Activated naive CD4-positive, alpha-beta T cell treated with anti-CD3 and anti-CD28 coated beads for 36 hours (primary cell): ENCODE measurements at regions of chr7 and their contacts with region 1.

Region 1: DNA sequence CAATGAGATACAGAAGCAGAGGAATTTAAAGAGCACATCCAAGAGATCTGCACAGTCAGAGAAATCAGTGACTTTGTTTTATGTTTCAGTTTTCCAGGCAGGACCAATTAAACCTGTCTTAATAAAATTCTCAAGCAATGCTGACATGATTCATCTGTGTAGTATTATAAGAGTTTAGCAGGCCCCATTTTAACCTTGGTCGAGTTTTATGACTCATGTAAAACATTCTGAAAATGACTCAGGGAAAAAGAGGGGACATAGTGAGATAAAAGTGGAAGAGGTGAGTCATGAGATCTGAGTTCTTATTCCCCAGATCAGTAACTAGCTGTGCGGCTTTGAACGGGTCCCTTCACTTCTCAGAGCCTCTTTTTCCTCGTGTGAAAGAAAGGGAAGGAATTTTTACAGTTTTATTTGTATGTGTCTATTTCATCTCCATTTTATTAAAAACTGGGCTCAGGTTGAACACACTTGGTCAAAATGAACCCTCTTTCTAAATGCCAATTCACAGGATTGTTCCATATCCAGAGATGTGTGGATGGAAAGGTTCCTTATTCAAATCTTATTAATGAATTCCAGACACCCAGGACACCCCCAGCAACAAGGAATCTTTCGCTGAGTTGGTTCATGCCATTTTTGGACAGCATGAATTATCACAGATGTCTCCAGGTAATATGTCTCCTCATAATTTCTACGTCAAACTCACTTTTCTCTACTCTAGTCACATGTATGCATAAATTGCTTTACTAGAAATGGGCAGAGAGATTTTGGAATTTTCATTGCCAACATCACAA is 143.2 kb downstream of the JAZF1 start:
- DNase-seq: peak; percentile 50
- H3K4me3 Mint-ChIP-seq: no peak overlapping the region
- H3K27ac Mint-ChIP-seq: no peak overlapping the region
- H3K4me1 Mint-ChIP-seq: peaks cover 26% of the 10 kb centered on the region
- H3K27me3 Mint-ChIP-seq: peaks cover 16% of the 10 kb centered on the region

Region 2: DNA sequence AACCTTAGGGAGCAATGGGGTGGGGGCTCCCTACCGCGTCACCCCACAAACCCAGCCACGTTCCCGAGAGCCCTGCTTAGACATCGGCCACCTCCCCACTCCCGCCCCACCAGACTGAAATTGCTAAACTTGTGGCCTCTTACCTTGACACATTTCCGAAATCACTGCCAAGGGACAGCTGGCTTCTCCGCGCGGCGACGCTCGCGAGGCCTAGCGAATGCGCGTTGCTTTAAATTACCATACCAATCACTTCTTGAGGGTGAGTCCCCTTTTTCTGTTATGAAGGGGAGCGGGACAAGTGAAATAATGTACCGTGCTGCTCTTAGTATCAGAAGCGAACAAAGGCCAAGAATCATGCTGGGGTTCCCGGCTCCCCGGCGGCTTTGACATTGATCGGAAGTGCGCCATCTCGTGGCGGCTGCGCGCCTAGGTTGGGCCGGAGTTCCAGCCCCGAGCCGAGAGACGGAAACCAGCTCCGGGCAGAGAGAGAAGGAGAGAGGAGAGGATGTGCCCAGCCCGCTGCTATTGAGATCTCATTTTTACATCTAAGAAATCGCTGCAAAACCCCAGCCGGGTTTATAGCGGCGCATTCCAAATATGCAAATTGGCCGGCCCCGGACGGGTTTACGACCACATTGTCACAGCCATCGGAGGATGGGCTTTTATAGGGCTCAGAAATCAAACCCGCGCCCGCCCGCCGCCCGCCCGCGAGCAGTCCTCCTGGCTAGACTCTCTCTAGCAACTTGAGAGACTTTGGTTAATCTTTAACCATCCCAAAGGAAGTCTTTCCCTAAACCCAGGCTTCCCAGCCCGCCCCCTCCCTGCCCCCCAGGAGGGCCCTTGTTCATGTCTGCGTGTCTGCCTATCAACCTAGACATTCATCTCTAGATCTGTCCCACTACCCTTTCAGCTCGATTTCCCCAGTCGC is 857.6 kb before region 1 on chr7:
- CTCF ChIA-PET with region 1: no interaction called
- intact Hi-C with region 1: no loop called
- DNase-seq: peak; percentile 57
- H3K4me3 Mint-ChIP-seq: peak overlapping the region; percentile 4
- H3K27ac Mint-ChIP-seq: no peak overlapping the region
- H3K4me1 Mint-ChIP-seq: peaks cover 8% of the 10 kb centered on the region
- H3K27me3 Mint-ChIP-seq: peaks cover 72% of the 10 kb centered on the region

Region 3: GRCh38 chr7:27739909-27740448 is 297.4 kb before region 1 on chr7 and contains the start of gene TAX1BP1:
- CTCF ChIA-PET with region 1: no interaction called
- intact Hi-C with region 1: loop called (anchors 1 kb)
- DNase-seq: peak; percentile 96
- H3K4me3 Mint-ChIP-seq: peak within 1 kb of the TSS; percentile 96
- H3K27ac Mint-ChIP-seq: peak within 1 kb of the TSS; percentile 98
- H3K4me1 Mint-ChIP-seq: peaks cover 35% of the 10 kb centered on the region
- H3K27me3 Mint-ChIP-seq: no peaks in the 10 kb centered on the region
- total RNA-seq, gene TAX1BP1: 84.1 to 87.9 TPM

Region 4: DNA sequence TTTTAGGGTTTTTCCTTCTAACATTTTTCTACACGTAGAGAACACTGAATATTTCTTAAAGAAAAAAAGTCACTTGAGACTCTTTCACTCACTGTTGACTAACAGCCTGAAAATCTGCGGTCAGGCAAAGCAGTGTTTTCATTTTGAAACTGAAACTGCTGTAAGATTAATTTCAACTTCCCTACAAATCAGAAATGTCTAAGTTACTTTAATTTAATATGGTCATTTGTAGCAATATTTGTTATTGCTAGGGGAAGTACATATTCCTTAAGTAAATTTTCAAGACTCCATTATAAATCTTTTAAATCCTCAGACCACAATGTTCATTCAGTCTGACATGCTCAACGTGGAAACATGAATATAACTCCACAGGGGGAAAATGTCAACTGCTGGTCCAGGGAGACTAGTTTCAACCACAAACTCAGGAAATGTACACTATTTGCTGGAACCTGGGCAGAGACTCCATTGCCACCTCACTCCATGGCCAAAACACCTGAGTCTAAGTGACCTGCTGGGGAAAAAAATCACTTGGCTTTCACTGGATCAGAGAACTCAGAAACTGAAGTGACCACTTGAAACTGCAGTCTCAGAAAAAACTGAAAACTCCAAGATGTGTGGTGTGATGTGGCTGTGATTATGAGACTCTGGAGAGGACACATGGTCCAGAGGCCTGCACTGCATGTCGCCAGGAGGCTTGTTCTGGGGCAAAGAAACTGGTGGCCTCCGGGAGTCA is 136.2 kb before region 1 on chr7:
- CTCF ChIA-PET with region 1: no interaction called
- intact Hi-C with region 1: loop called (anchors 1 kb)
- DNase-seq: peak; percentile 51
- H3K4me3 Mint-ChIP-seq: no peak overlapping the region
- H3K27ac Mint-ChIP-seq: no peak overlapping the region
- H3K4me1 Mint-ChIP-seq: peaks cover 30% of the 10 kb centered on the region
- H3K27me3 Mint-ChIP-seq: no peaks in the 10 kb centered on the region

Region 5: GRCh38 chr7:28239823-28240204 is 202.4 kb after region 1 on chr7:
- CTCF ChIA-PET with region 1: no interaction called
- intact Hi-C with region 1: loop called (anchors 1 kb)
- DNase-seq: peak; percentile 6
- H3K4me3 Mint-ChIP-seq: no peak overlapping the region
- H3K27ac Mint-ChIP-seq: no peak overlapping the region
- H3K4me1 Mint-ChIP-seq: peaks cover 9% of the 10 kb centered on the region
- H3K27me3 Mint-ChIP-seq: peaks cover 48% of the 10 kb centered on the region

Region 6: DNA sequence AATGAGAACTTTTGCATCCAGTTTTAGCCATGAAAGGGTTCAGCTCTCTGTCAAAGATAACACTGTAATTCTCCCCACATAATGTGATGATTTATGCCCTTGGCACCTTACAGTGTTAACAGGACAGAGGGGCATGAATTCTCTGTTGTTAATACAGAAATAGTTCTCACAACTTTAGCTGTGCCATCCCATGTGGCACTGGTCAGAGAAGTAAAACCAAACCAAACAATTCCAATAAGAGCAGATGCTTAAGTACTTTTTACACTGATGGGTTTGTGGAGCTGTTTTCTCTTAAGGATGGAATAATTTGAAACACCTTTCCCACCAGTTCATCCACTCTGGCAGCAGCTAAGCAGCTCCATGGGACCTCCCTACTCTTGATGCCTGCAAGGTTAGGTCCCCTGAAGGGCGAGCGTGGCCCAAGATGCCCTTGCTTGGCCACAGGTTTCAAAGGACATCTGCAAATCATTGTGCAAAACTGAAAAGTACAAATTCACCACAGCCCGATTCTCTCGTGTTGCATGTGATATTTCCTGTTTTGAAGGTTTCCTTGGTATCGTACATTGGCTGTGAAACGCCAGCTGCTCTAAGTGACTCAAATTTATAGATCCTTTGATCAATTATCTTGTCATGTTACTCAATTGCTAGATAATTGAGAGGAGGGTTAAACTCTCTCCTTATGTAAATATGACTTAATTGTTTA is 292.4 kb after region 1 on chr7:
- CTCF ChIA-PET with region 1: interaction called, 3 read pairs
- intact Hi-C with region 1: loop called (anchors 1 kb)
- DNase-seq: peak; percentile 25
- H3K4me3 Mint-ChIP-seq: no peak overlapping the region
- H3K27ac Mint-ChIP-seq: no peak overlapping the region
- H3K4me1 Mint-ChIP-seq: peaks cover 40% of the 10 kb centered on the region
- H3K27me3 Mint-ChIP-seq: peaks cover 3% of the 10 kb centered on the region

Region 7: GRCh38 chr7:29265208-29265923 is 1228.0 kb after region 1 on chr7:
- CTCF ChIA-PET with region 1: no interaction called
- intact Hi-C with region 1: no loop called
- DNase-seq: no peak
- H3K4me3 Mint-ChIP-seq: no peak overlapping the region
- H3K27ac Mint-ChIP-seq: no peak overlapping the region
- H3K4me1 Mint-ChIP-seq: peaks cover 8% of the 10 kb centered on the region
- H3K27me3 Mint-ChIP-seq: peaks cover 2% of the 10 kb centered on the region